Activated CD4-positive, alpha-beta memory T cell treated with anti-CD3 and anti-CD28 coated beads for 36 hours (primary cell): ENCODE measurements at regions of chr20 and their contacts with region 1.

Region 1: DNA sequence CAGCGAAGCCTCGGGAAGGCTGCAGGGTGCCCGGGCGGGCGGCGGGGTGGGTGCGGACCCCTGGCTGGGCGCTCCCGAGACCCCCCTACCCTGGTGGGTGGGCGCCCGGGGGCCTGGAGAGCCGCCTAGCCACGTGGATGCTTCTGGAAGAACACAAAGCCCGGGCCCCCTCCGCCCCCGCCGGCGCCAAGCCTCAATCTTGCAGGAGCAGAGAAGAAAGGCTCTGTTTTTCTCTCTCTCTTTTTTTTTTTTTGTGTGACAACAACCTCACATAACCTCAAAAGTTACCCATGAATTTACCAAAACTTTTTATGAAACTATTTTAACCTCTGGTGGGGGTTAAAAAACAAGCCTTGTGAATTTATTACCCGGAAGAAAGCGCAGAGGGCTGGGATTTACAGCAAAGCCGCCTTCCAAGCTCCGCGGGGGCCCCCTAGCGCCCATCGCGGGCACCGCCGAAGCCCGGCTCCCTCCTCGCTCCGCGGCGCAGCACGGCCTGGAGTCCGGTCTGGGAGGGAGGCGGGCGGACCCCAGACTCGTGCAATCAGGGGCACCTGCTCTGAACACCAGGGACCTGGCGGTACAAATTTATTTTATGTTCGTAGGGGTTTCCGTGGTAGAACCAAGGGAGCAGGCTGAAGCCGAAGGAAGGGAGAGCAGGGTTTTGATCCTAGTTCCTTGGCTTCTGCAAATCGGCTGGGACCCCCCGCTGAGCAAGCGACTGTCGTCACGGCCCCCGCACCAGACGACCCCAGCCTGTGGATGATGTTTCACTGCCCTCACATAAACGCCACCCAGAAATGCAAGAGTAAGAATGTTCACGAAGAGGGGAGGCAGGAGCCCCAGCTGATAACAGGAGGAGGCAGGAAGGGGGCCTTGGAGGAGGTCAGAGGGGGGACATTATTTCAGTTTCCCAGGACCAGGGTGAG is 58.9 kb downstream of the ZNF831 start:
- DNase-seq: peak; percentile 86
- H3K4me3 Mint-ChIP-seq: peak overlapping the region; percentile 68
- H3K27ac Mint-ChIP-seq: no peak overlapping the region
- H3K4me1 Mint-ChIP-seq: peaks cover 26% of the 10 kb centered on the region
- H3K27me3 Mint-ChIP-seq: no peaks in the 10 kb centered on the region

Region 2: DNA sequence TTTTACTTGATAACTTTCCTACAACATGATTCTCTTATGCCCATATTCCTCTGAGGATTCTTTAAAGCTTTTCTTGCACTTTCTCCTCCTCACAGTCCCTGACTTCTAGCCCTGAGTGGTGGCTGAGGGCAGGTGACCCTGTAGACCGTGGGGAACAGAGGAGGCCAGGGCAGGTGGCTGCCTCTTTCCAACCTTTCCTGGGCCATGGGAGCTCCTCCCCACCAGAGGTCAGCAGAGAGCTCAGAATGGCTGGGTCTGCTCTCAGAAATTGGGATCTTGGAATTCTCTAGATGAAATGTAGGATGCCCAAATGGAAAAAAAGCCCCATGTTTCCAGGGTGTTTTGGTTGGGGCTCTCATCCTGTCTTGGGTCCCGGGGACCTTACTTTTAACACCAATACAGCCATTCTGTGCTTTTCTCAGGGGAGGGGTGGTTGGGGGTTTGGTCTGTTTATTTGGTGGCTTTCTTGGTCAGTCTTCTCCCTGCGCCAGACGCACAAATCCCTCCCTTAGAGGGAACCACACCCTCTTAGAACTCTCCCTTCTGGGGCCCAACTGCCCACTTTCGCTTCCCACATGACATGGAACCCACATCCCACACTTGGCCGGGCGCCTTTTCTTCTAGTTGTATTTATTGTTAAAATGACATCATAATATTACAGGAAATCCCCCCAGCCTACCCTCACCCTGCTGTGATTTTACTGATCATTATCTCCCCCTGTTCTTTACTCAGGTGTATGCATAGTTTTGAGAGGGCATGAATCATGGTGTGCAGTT is 352.1 kb before region 1 on chr20:
- CTCF ChIA-PET with region 1: interaction called, 14 read pairs
- POLR2A ChIA-PET with region 1: no interaction called
- intact Hi-C with region 1: loop called (anchors 2 kb)
- DNase-seq: peak; percentile 64
- H3K4me3 Mint-ChIP-seq: no peak overlapping the region
- H3K27ac Mint-ChIP-seq: no peak overlapping the region
- H3K4me1 Mint-ChIP-seq: peaks cover 9% of the 10 kb centered on the region
- H3K27me3 Mint-ChIP-seq: peaks cover 2% of the 10 kb centered on the region

Region 3: GRCh38 chr20:59013959-59014608 is 208.4 kb before region 1 on chr20:
- CTCF ChIA-PET with region 1: no interaction called
- POLR2A ChIA-PET with region 1: no interaction called
- intact Hi-C with region 1: no loop called
- DNase-seq: peak; percentile 37
- H3K4me3 Mint-ChIP-seq: no peak overlapping the region
- H3K27ac Mint-ChIP-seq: peak overlapping the region; percentile 47
- H3K4me1 Mint-ChIP-seq: peaks cover 35% of the 10 kb centered on the region
- H3K27me3 Mint-ChIP-seq: no peaks in the 10 kb centered on the region

Region 4: GRCh38 chr20:59240006-59240405 is 17.5 kb after region 1 on chr20:
- CTCF ChIA-PET with region 1: interaction called, 13 read pairs
- POLR2A ChIA-PET with region 1: no interaction called
- intact Hi-C with region 1: no loop called
- DNase-seq: no peak
- H3K4me3 Mint-ChIP-seq: no peak overlapping the region
- H3K27ac Mint-ChIP-seq: no peak overlapping the region
- H3K4me1 Mint-ChIP-seq: peaks cover 15% of the 10 kb centered on the region
- H3K27me3 Mint-ChIP-seq: no peaks in the 10 kb centered on the region

Region 5: GRCh38 chr20:59340201-59340885 is 117.8 kb after region 1 on chr20:
- CTCF ChIA-PET with region 1: no interaction called
- POLR2A ChIA-PET with region 1: no interaction called
- intact Hi-C with region 1: no loop called
- DNase-seq: no peak
- H3K4me3 Mint-ChIP-seq: no peak overlapping the region
- H3K27ac Mint-ChIP-seq: no peak overlapping the region
- H3K4me1 Mint-ChIP-seq: no peaks in the 10 kb centered on the region
- H3K27me3 Mint-ChIP-seq: no peaks in the 10 kb centered on the region

Region 6: GRCh38 chr20:59403261-59403961 is 180.9 kb after region 1 on chr20:
- CTCF ChIA-PET with region 1: interaction called, 13 read pairs
- POLR2A ChIA-PET with region 1: no interaction called
- intact Hi-C with region 1: loop called (anchors 5 kb)
- DNase-seq: peak; percentile 77
- H3K4me3 Mint-ChIP-seq: peak overlapping the region; percentile 57
- H3K27ac Mint-ChIP-seq: no peak overlapping the region
- H3K4me1 Mint-ChIP-seq: peaks cover 2% of the 10 kb centered on the region
- H3K27me3 Mint-ChIP-seq: peaks cover 14% of the 10 kb centered on the region